CD4-positive, alpha-beta T cell (primary cell): ENCODE measurements at regions of chr2 and their contacts with region 1.

Region 1: DNA sequence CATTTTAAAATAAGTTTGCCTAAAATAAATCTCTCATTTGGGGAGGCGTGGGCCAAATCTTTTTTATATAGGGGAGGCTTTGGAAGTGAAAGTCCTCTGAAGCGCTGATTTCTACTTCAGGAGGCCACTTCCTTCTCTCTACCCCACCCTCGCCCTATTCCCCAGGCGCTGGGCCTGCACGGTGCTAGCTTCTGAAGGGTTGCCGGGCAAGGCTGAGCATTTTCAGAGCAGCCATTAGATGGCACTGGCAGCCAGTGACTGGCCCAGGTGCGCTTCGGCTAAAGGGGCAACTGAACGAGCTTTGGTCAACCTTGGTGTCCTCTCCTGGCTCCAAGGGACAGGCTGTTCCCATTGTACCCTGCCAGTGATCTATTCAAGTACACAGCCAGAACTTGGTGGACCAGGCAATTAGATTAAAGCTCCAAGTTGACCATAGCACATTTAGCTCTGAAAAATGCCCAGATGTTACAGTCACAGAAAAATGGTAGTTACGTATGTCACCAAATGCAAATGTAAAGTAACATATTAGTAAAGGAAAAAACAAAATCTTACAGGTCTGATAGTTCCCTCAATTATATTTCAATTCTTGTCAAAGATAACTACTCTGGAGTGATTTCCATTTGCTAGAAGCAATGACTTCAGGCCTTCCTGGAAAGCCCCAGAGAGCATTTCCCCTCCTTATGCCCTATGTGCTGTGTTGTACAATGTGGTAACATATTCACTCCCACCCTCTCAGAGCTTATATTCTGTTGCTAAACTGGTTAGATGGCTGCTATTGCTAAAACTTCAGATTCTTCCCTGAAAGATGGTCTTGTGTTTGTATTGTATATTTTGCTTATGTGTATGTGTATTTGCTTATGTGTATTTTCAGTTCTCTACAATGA is 2.1 kb downstream of the POMC start:
- DNase-seq: peak; percentile 2 to 70 (median 39)
- ATAC-seq: peak; percentile 58
- H3K4me3 ChIP-seq: no peak overlapping the region
- H3K4me3 Mint-ChIP-seq: peak overlapping the region; percentile 60
- H3K27ac ChIP-seq: no peak overlapping the region
- H3K27ac Mint-ChIP-seq: peak overlapping the region; percentile 37
- H3K4me1 ChIP-seq: peaks cover 32% of the 10 kb centered on the region
- H3K4me1 Mint-ChIP-seq: peaks cover 36% of the 10 kb centered on the region
- H3K27me3 ChIP-seq: peaks cover 31 to 37% of the 10 kb centered on the region in 2 experiments
- H3K27me3 Mint-ChIP-seq: peaks cover 49% of the 10 kb centered on the region
- CTCF ChIP-seq: peak; percentile 59

Region 2: DNA sequence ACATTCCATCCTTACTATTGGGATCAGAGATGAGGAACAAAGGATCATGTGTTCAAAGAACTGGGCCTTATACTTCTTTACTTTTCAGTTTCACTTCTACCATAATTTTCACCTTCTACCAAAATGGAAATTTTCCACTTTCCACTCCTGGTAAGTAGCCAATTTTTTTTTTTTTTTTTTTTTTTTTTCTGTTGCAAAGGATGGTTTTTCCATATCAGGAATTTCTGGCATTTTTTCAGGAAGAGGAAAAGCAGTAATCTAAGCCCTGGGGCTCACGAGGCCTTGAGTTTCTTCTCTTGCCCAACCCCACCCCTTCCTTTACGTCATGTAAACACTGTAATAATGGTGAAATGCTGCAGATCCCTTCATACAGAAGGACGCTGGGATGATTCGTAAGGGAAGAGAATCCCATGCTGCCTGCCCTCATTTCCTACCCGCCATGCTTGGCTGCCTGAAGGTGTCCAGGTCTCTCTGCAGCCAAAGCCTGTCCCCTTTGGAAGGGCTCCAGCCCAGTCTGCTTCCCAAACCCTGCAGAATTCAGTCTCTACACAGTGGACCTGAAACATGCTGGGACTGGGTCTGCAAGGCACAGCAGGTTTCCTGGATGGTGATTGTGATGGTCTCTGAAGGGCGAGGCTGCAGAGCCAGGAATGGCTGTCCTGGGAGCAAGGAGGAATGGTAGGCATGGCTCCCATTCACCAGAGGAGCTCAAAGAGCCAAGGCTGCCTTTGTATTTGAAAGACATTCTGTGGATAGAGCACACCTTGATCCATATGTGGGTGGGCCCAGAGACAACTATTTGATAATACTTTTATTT is 67.4 kb before region 1 on chr2:
- CTCF ChIA-PET with region 1: no interaction called
- POLR2A ChIA-PET with region 1: no interaction called
- intact Hi-C with region 1: no loop called
- DNase-seq: no peak
- ATAC-seq: no peak
- H3K4me3 ChIP-seq: no peak overlapping the region
- H3K4me3 Mint-ChIP-seq: no peak overlapping the region
- H3K27ac ChIP-seq: no peak overlapping the region
- H3K27ac Mint-ChIP-seq: no peak overlapping the region
- H3K4me1 ChIP-seq: no peaks in the 10 kb centered on the region
- H3K4me1 Mint-ChIP-seq: no peaks in the 10 kb centered on the region
- H3K27me3 ChIP-seq: no peaks in the 10 kb centered on the region
- H3K27me3 Mint-ChIP-seq: no peaks in the 10 kb centered on the region
- CTCF ChIP-seq: no peak

Region 3: DNA sequence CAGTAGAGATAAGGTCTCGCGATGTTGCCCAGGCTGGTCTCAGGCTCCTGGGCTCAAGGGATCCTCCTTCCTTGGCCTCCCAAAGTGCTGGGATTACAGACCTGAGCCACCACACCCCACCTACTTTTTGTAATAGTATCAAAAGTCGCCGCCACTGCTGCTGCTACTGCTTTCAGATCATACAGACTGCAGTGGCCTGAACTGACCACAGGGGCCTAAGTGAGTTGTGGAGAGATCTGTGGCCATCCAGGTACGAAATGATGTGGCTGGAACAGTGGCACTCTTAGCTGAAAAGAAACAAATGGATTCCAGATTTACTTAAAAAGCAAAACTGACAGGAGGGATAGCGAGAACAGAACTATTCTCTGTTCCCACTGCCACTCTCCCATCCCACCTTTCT is 35.0 kb after region 1 on chr2:
- CTCF ChIA-PET with region 1: interaction called, 4 read pairs
- POLR2A ChIA-PET with region 1: interaction called, 5 read pairs
- intact Hi-C with region 1: loop called in 1 of 2 experiments (anchors 2 kb)
- DNase-seq: no peak
- ATAC-seq: no peak
- H3K4me3 ChIP-seq: no peak overlapping the region
- H3K4me3 Mint-ChIP-seq: no peak overlapping the region
- H3K27ac ChIP-seq: no peak overlapping the region
- H3K27ac Mint-ChIP-seq: no peak overlapping the region
- H3K4me1 ChIP-seq: peaks cover 15% of the 10 kb centered on the region
- H3K4me1 Mint-ChIP-seq: peaks cover 14% of the 10 kb centered on the region
- H3K27me3 ChIP-seq: no peaks in the 10 kb centered on the region
- H3K27me3 Mint-ChIP-seq: no peaks in the 10 kb centered on the region
- CTCF ChIP-seq: no peak